IMR-90 (cell line): ENCODE measurements at regions of chr2 and their contacts with region 1.

Region 1: GRCh38 chr2:207166039-207166348 is 246 bp upstream of the KLF7 start:
- DNase-seq: peak; percentile 100
- ATAC-seq: peak; percentile 86
- H3K4me3 ChIP-seq: peak overlapping the region; percentile 64
- H3K27ac ChIP-seq: no peak overlapping the region
- H3K4me1 ChIP-seq: peaks cover 7% of the 10 kb centered on the region
- H3K27me3 ChIP-seq: no peaks in the 10 kb centered on the region
- CTCF ChIP-seq: no peak
- POLR2A ChIP-seq: no peak
- RAD21 ChIP-seq: no peak

Region 2: DNA sequence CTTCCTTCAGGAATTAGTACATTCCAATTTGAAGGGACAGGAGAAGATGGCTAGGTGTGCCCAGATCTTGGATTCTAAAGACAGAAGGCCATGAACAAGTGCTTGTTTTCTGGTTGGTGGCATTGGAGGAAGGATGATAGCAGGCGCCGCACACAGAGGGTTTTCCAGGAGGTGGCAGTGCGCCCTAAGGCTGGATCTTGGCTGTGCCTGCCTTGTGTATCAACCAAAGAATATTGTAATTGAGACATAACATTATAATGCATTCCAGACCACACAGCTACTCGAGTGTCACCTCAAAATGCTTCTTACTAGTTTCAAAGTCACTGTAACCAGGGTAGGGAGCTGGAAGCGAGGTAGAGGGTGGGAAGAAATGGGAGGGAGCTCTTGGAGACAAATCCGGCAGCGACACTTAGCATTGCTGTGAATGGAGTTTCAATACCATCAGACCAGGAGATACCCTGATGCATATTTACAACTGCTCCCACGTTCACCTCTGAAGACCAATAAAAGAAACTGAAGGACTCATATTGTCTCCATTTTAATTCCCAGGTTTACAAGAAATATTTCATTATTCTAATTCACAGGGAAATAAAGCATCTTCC is 184.2 kb before region 1 on chr2:
- CTCF ChIA-PET with region 1: interaction called, 3 read pairs
- POLR2A ChIA-PET with region 1: interaction called, 27 read pairs
- dilution Hi-C with region 1: no loop called
- in situ Hi-C with region 1: loop called (anchors 10 kb)
- intact Hi-C with region 1: loop called (anchors 1 kb)
- DNase-seq: peak; percentile 76
- ATAC-seq: peak; percentile 87
- H3K4me3 ChIP-seq: no peak overlapping the region
- H3K27ac ChIP-seq: no peak overlapping the region
- H3K4me1 ChIP-seq: peaks cover 9% of the 10 kb centered on the region
- H3K27me3 ChIP-seq: peaks cover 3% of the 10 kb centered on the region
- CTCF ChIP-seq: peak; percentile 97
- POLR2A ChIP-seq: peak; percentile 48; the same call in 1 of the 2 replicates
- RAD21 ChIP-seq: peak; percentile 99

Region 3: DNA sequence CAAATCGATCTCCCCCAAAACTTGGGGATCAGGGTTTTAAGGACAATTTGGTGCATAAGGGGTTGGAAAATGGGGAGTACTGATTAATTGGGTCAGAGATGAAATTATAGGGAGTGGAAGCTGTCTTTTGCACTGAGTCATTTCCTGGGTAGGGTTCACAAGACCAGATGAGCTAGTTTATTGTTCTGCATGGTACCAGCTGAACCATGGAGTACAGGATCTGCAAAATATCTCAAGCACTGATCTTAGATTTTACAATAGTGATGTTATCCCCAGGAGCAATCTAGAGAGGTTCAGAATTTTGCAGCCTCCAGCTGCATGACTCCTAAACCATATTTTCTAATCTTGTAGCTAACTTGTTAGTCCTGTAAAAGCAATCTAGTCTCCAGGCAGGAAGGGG is 153.5 kb before region 1 on chr2:
- CTCF ChIA-PET with region 1: no interaction called
- POLR2A ChIA-PET with region 1: no interaction called
- dilution Hi-C with region 1: no loop called
- in situ Hi-C with region 1: no loop called
- intact Hi-C with region 1: no loop called
- DNase-seq: no peak
- ATAC-seq: no peak
- H3K4me3 ChIP-seq: no peak overlapping the region
- H3K27ac ChIP-seq: no peak overlapping the region
- H3K4me1 ChIP-seq: no peaks in the 10 kb centered on the region
- H3K27me3 ChIP-seq: peaks cover 2% of the 10 kb centered on the region; the same call in 1 of the 2 replicates
- CTCF ChIP-seq: no peak
- POLR2A ChIP-seq: no peak
- RAD21 ChIP-seq: no peak

Region 4: DNA sequence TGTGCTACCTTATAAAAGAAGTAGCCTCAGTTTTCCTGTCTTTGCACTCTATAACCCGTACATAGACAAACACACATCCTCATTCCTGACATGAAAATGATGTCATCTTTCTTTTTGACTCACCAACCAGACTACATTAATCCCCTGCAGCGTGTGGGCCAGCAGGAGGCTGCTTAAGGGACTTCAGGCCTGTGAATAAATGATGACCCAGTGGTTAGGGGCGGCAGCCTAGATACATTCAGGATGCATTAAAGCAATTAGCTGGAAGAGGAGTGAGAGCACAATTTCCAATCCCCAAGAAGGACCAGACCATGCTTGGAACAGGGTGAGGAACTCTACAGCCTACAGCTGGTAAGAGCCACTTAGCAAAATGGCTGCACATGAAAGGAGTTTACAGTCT is 57.1 kb after region 1 on chr2:
- CTCF ChIA-PET with region 1: interaction called, 4 read pairs
- POLR2A ChIA-PET with region 1: interaction called, 4 read pairs
- dilution Hi-C with region 1: no loop called
- in situ Hi-C with region 1: no loop called
- intact Hi-C with region 1: loop called (anchors 1 kb)
- DNase-seq: peak; percentile 87
- ATAC-seq: peak; percentile 84
- H3K4me3 ChIP-seq: no peak overlapping the region
- H3K27ac ChIP-seq: no peak overlapping the region
- H3K4me1 ChIP-seq: peaks cover 13% of the 10 kb centered on the region
- H3K27me3 ChIP-seq: no peaks in the 10 kb centered on the region
- CTCF ChIP-seq: no peak
- POLR2A ChIP-seq: no peak
- RAD21 ChIP-seq: peak; percentile 19; the same call in 1 of the 2 replicates

Region 5: GRCh38 chr2:207311316-207312005 is 145.5 kb after region 1 on chr2:
- CTCF ChIA-PET with region 1: no interaction called
- POLR2A ChIA-PET with region 1: interaction called, 4 read pairs
- dilution Hi-C with region 1: no loop called
- in situ Hi-C with region 1: no loop called
- intact Hi-C with region 1: loop called (anchors 1 kb)
- DNase-seq: peak; percentile 100
- ATAC-seq: peak; percentile 82
- H3K4me3 ChIP-seq: no peak overlapping the region
- H3K27ac ChIP-seq: peak overlapping the region; percentile 44; the same call in 1 of the 2 replicates
- H3K4me1 ChIP-seq: peaks cover 12% of the 10 kb centered on the region
- H3K27me3 ChIP-seq: no peaks in the 10 kb centered on the region
- CTCF ChIP-seq: peak; percentile 51
- POLR2A ChIP-seq: no peak; the same call in 1 of the 2 replicates
- RAD21 ChIP-seq: peak; percentile 65

Region 6: GRCh38 chr2:207473049-207473930 is 307.3 kb after region 1 on chr2:
- CTCF ChIA-PET with region 1: interaction called, 3 read pairs
- POLR2A ChIA-PET with region 1: interaction called, 10 read pairs
- dilution Hi-C with region 1: no loop called
- in situ Hi-C with region 1: loop called (anchors 5 kb)
- intact Hi-C with region 1: loop called (anchors 1 kb)
- DNase-seq: peak; percentile 88
- ATAC-seq: peak; percentile 83
- H3K4me3 ChIP-seq: peak overlapping the region; percentile 14; the same call in 1 of the 2 replicates
- H3K27ac ChIP-seq: peak overlapping the region; percentile 62
- H3K4me1 ChIP-seq: peaks cover 7% of the 10 kb centered on the region
- H3K27me3 ChIP-seq: no peaks in the 10 kb centered on the region
- CTCF ChIP-seq: peak; percentile 92
- POLR2A ChIP-seq: no peak
- RAD21 ChIP-seq: peak; percentile 98